ENCODE measurements at regions of chr6 and their contacts with region 1.

Region 1: GRCh38 chr6:131949909-131950766 is 1.0 kb downstream of the CCN2 start:
- DNase-seq: peak; percentile 92
- ATAC-seq: peak; percentile 9
- H3K4me3 ChIP-seq: peak overlapping the region; percentile 66
- H3K27ac ChIP-seq: peak overlapping the region; percentile 83
- H3K4me1 ChIP-seq: peaks cover 10% of the 10 kb centered on the region
- H3K27me3 ChIP-seq: no peaks in the 10 kb centered on the region
- CTCF ChIP-seq: peak; percentile 48
- POLR2A ChIP-seq: peak; percentile 57
- RAD21 ChIP-seq: peak; percentile 44

Region 2: GRCh38 chr6:131724114-131724513 is 226.0 kb before region 1 on chr6:
- CTCF ChIA-PET with region 1: no interaction called
- POLR2A ChIA-PET with region 1: no interaction called
- dilution Hi-C with region 1: no loop called
- in situ Hi-C with region 1: no loop called
- intact Hi-C with region 1: no loop called
- DNase-seq: no peak
- ATAC-seq: no peak
- H3K4me3 ChIP-seq: no peak overlapping the region
- H3K27ac ChIP-seq: no peak overlapping the region
- H3K4me1 ChIP-seq: no peaks in the 10 kb centered on the region
- H3K27me3 ChIP-seq: no peaks in the 10 kb centered on the region; the same call in 1 of the 2 replicates
- CTCF ChIP-seq: no peak
- POLR2A ChIP-seq: no peak
- RAD21 ChIP-seq: no peak

Region 3: DNA sequence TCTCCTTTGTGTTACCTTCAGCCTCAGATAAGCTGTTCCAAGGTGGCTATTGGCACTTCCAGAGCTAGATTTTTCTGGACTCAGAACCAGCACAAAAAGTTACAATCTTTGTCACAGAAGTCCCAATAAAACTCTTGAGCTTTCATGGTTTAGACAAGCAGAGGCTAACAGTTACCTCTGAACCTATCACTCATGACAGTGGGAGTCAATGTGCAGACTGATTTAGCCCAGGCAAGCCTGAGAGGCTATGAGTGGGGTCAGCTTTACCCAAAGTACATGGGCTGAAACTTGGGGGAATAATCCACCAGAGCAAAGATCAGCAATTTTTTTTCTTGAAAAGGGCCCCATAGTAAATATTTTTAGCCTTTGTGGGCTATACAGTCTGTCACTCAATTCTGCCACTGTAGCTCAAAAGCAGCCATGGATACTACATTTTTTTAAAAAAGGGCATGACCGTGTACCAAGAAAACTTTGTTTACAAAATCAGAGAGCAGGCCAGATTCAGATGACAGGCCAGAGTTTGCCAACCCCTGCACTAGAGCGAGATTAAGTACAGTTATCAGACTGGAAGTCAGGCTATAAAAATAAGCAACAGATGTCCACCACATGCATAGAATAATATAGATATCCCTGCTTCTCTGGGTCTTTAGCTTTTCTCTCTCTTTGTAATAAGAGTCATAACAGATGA is 18.9 kb before region 1 on chr6:
- CTCF ChIA-PET with region 1: interaction called, 3 read pairs
- POLR2A ChIA-PET with region 1: interaction called, 12 read pairs
- dilution Hi-C with region 1: no loop called
- in situ Hi-C with region 1: no loop called
- intact Hi-C with region 1: no loop called
- DNase-seq: peak; percentile 62
- ATAC-seq: peak; percentile 76
- H3K4me3 ChIP-seq: no peak overlapping the region
- H3K27ac ChIP-seq: peak overlapping the region; percentile 61; the same call in 1 of the 2 replicates
- H3K4me1 ChIP-seq: peaks cover 7% of the 10 kb centered on the region
- H3K27me3 ChIP-seq: no peaks in the 10 kb centered on the region
- CTCF ChIP-seq: no peak
- POLR2A ChIP-seq: no peak
- RAD21 ChIP-seq: no peak

Region 4: DNA sequence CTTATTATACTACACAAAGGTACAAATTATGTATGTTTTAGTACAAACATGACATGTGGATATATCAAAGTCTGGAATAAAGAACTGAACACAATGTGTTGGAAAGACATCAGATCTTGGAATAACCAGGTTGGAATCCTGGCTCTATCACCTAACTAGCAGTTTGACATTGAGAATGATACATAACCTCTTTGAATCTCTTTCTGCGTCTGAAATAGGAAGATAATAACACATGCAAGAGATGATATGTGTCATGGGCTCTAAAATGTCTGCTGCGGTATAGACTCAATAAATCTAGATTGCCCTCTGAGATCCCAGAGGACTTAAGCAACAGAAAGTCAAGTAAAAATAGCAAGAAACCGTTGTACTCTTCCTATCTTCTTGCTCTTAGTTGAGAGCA is 67.8 kb after region 1 on chr6:
- CTCF ChIA-PET with region 1: no interaction called
- POLR2A ChIA-PET with region 1: no interaction called
- dilution Hi-C with region 1: no loop called
- in situ Hi-C with region 1: no loop called
- intact Hi-C with region 1: no loop called
- DNase-seq: no peak
- ATAC-seq: no peak
- H3K4me3 ChIP-seq: no peak overlapping the region
- H3K27ac ChIP-seq: no peak overlapping the region
- H3K4me1 ChIP-seq: peaks cover 4% of the 10 kb centered on the region; the same call in 1 of the 2 replicates
- H3K27me3 ChIP-seq: no peaks in the 10 kb centered on the region
- CTCF ChIP-seq: no peak
- POLR2A ChIP-seq: no peak
- RAD21 ChIP-seq: no peak

Region 5: GRCh38 chr6:132063738-132064137 is 113.6 kb after region 1 on chr6:
- CTCF ChIA-PET with region 1: no interaction called
- POLR2A ChIA-PET with region 1: interaction called, 8 read pairs
- dilution Hi-C with region 1: no loop called
- in situ Hi-C with region 1: no loop called
- intact Hi-C with region 1: loop called (anchors 2 kb)
- DNase-seq: peak; percentile 85
- ATAC-seq: peak; percentile 31
- H3K4me3 ChIP-seq: no peak overlapping the region
- H3K27ac ChIP-seq: peak overlapping the region; percentile 81
- H3K4me1 ChIP-seq: peaks cover 11% of the 10 kb centered on the region; the same call in 1 of the 2 replicates
- H3K27me3 ChIP-seq: no peaks in the 10 kb centered on the region
- CTCF ChIP-seq: no peak
- POLR2A ChIP-seq: no peak
- RAD21 ChIP-seq: no peak

Region 6: DNA sequence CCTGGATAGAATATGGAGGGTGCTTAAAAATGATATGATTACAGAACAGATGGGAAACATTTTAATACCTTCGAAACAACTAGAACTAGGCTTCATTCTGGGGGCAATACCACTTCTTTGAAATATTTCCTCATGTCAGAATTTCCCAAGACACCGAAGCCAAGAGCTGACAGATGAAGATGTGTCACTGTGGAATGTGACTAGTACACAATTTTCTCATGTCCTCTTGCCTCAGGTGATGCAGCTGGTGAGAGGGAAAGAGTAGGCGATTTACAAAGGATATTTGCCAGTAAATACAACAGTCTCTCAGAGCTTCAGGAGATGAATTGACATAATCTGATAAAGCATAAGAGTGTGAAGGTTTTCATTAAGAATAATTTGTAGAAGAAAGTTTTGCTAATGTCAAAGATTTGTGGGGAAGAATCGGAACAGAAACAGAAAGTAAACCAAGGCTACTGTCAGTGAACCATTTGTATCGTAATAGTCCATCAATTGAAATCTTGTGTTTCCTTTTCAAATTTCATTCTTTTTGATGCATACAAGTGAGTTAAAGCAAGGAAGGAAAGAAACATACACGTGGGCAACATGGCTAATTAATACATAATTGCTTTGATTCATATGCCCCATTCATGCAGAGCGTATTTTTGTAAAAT is 165.7 kb after region 1 on chr6:
- CTCF ChIA-PET with region 1: no interaction called
- POLR2A ChIA-PET with region 1: interaction called, 11 read pairs
- dilution Hi-C with region 1: no loop called
- in situ Hi-C with region 1: no loop called
- intact Hi-C with region 1: no loop called
- DNase-seq: peak; percentile 33
- ATAC-seq: no peak
- H3K4me3 ChIP-seq: peak overlapping the region; percentile 35; the same call in 1 of the 2 replicates
- H3K27ac ChIP-seq: no peak overlapping the region; the same call in 1 of the 2 replicates
- H3K4me1 ChIP-seq: peaks cover 7% of the 10 kb centered on the region
- H3K27me3 ChIP-seq: no peaks in the 10 kb centered on the region
- CTCF ChIP-seq: no peak
- POLR2A ChIP-seq: no peak
- RAD21 ChIP-seq: no peak

Region 7: GRCh38 chr6:132131758-132132157 is 181.6 kb after region 1 on chr6:
- CTCF ChIA-PET with region 1: interaction called, 4 read pairs
- POLR2A ChIA-PET with region 1: interaction called, 36 read pairs
- dilution Hi-C with region 1: no loop called
- in situ Hi-C with region 1: loop called (anchors 5 kb)
- intact Hi-C with region 1: loop called (anchors 1 kb)
- DNase-seq: peak; percentile 100
- ATAC-seq: peak; percentile 80
- H3K4me3 ChIP-seq: no peak overlapping the region
- H3K27ac ChIP-seq: peak overlapping the region; percentile 96; the same call in 1 of the 2 replicates
- H3K4me1 ChIP-seq: peaks cover 26% of the 10 kb centered on the region
- H3K27me3 ChIP-seq: no peaks in the 10 kb centered on the region
- CTCF ChIP-seq: no peak
- POLR2A ChIP-seq: peak; percentile 60
- RAD21 ChIP-seq: no peak; the same call in 1 of the 2 replicates

Region 8: DNA sequence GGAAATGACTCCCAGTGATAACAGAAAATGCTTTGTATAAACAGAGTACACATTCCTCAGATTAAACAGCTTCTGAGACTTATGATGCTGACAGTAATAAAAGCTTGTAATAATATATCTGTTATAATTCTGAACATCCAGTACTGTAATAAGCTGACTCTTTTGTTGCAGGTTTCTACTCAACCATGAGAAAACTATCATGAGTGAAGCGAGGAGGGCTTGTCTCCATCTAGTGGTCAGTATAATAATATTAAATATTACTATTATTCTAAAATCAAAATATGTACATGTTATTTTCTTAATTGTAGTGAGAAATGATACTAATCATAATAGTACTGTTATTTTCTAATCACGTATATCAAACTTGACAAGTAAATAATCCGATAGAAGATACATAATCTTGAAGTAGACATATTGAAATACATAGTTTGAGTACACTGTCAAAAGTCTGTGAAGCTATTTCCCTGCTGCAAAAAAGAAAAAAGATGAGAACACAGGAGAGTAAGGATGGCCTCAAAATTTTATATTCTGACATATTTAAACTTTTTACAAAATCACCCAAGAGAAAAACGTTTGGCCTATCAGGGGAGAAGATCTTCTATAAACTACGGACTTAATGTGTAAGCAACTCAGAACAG is 268.0 kb after region 1 on chr6:
- CTCF ChIA-PET with region 1: interaction called, 5 read pairs
- POLR2A ChIA-PET with region 1: interaction called, 3 read pairs
- dilution Hi-C with region 1: no loop called
- in situ Hi-C with region 1: no loop called
- intact Hi-C with region 1: loop called (anchors 1 kb)
- DNase-seq: peak; percentile 68
- ATAC-seq: peak; percentile 82
- H3K4me3 ChIP-seq: no peak overlapping the region
- H3K27ac ChIP-seq: no peak overlapping the region
- H3K4me1 ChIP-seq: no peaks in the 10 kb centered on the region; the same call in 1 of the 2 replicates
- H3K27me3 ChIP-seq: no peaks in the 10 kb centered on the region
- CTCF ChIP-seq: peak; percentile 66
- POLR2A ChIP-seq: no peak
- RAD21 ChIP-seq: peak; percentile 77

Region 9: GRCh38 chr6:133410628-133411027 is 1460.5 kb after region 1 on chr6:
- CTCF ChIA-PET with region 1: no interaction called
- POLR2A ChIA-PET with region 1: no interaction called
- dilution Hi-C with region 1: no loop called
- in situ Hi-C with region 1: no loop called
- intact Hi-C with region 1: no loop called
- DNase-seq: no peak
- ATAC-seq: no peak
- H3K4me3 ChIP-seq: no peak overlapping the region
- H3K27ac ChIP-seq: no peak overlapping the region
- H3K4me1 ChIP-seq: 0 out of 2 replicates have a peak, but pooled peaks cover 3% of the 10 kb centered on the region
- H3K27me3 ChIP-seq: no peaks in the 10 kb centered on the region
- CTCF ChIP-seq: no peak
- POLR2A ChIP-seq: no peak
- RAD21 ChIP-seq: no peak

Measured in IMR-90 (cell line).